ENCODE measurements at regions of chr1 and their contacts with region 1.

Region 1: GRCh38 chr1:39845275-39846116 is 37.8 kb downstream of the TRIT1 start:
- DNase-seq: peak; percentile 85

Region 2: DNA sequence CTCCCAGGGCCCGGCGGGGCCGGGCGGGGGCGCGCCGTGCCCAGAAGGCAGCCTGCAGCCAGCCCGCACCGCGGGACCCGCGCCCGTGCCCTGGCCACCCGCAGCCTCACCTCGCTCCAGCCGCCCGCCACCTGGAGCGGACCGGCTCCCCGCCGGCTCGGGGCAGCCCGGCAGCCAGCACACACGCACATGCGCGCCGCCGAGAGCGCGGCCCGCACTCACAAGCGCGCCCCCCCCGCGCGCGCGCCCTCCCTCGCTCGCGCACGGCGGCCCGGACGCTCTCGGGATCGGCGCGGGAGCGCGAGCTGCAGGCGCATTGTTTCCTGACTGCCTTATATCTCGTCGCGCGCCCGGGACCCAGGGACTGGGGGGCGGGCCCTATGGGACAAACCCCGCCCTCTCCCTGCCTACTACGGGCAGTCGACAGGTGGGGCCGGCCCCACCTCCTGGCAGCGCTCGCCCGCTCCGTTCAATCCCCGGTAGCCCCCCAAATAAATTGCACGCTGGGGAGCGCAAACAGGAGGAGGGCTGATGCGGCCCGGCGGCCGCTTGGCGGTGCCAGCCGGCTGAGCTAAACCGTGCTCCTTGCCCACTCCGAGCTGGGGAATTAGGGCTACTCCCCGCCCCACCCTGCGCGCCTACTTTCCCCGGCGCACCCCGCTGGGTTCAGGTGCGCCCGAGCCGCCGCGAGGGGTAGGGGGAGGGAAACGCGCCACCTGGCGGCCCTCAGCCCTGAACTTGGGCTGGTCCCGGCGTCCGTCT is 56.4 kb after region 1 on chr1 and contains the start of gene MYCL:
- intact Hi-C with region 1: loop called (anchors 5 kb)
- DNase-seq: peak; percentile 88
- total RNA-seq, gene MYCL: 0.35 TPM

Measured in cardiac septum (tissue), 1 donor.